GM10248 (cell line): ENCODE measurements at regions of chr11 and their contacts with region 1.

Region 1: DNA sequence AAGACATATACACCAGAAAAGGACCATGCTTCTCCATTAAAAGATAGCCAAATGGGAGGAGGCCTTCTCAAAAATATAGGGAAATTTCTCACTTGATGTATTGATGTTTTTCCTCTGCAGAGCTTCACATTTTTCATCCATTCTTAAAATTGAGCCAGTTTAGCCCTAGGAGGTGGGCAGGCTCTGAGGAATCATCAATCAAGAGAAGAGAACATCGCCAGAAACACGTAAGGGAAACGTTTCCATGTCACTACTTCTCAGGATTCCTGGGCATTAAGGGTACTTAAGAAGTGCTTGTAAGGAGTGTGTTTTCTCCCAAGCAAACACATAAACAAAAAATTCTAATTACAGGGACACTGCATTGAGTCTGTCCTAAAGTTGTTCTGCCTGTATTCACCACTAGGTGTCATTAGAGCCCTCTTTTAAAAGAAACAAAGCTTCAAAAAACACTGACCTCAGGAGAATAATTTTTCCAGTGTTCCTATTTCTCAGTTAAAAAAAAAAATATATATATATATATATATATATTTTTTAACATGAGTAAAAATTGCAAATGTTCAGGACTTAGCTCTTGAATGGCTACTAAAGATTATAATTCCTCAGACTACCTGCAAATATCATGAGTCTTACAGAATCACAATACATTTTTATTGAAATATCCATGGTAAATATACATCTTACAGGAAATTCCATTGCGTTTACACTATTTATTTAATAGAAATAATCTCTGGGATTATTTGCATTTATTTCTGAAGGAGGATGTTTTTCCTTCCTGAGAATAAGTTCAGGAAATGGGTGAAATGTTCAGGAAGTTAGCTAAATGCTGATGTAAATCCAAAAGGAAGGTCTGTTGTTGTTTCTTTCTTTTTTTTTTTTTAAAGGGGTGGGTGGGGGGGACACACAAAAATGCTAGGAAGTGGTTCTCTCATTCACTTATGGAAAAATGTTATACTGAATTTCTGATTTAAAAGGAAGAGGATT is 16.0 kb downstream of the FZD4 start:
- DNase-seq: peak; percentile 38
- CTCF ChIP-seq: peak; percentile 76

Region 2: GRCh38 chr11:86926975-86927374 is 12.2 kb before region 1 on chr11:
- CTCF ChIA-PET with region 1: interaction called, 20 read pairs
- POLR2A ChIA-PET with region 1: no interaction called
- DNase-seq: no peak
- CTCF ChIP-seq: no peak

Region 3: DNA sequence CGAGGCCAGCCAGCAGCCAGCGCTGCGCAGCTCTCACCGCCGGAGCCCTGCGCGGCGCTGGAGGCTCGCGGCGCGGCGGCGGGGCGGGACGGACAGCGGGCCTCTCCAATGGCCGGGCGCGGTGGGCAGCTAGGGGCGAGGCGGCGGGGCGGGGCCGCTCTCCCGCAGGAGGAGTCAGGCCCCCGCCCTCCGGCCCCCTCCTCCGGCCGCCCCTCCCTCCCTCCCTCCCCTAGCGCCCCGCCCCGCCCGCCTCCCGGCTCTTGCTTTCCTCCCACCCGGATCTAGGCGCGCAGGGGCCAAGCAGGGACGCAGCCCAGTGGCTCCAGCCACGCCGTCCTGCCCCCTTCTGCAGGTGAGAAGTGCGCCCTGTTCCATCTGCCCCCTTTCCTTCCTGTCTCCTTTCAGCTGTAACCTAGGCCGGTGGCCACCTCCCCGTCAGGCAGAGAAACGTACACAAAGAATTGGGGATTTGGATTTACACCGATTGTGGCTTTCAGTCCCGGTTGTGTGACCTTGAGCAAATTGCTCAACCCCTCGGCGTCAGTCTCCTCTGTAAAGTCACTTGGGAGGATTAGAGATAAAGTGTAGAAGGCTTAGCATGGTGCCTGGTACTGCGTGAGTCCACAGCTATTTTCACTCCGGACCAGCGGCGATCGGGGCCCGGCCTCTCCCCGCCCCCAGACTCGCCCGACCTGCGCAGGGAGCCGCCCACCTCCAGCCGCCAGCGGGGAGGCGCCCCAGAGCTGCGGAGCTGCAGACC is 16.4 kb after region 1 on chr11 and contains the start of gene FZD4:
- CTCF ChIA-PET with region 1: interaction called, 29 read pairs
- POLR2A ChIA-PET with region 1: no interaction called
- DNase-seq: peak; percentile 93
- CTCF ChIP-seq: peak; percentile 8

Region 4: DNA sequence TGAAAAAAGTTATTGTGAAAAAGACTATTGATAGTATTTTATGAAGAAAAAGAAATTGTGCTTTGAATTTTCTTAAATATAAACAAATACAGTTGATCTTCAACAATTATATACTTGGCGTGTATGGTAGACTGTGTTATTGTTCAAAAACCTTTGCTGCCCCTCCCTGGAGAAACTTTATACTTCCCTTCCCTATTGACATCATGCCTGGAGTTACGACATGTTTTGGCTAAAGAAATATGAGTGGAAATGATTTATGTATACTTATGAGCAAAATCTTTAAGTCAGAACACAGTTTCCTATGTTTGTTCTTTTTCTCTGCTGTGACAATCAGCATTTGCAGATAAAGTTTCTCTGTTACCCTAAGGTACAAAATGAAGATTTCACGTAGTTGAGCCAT is 342.3 kb after region 1 on chr11:
- CTCF ChIA-PET with region 1: interaction called, 19 read pairs
- POLR2A ChIA-PET with region 1: no interaction called
- DNase-seq: no peak
- CTCF ChIP-seq: no peak

Region 5: GRCh38 chr11:87290304-87290922 is 351.2 kb after region 1 on chr11:
- CTCF ChIA-PET with region 1: interaction called, 34 read pairs
- POLR2A ChIA-PET with region 1: no interaction called
- DNase-seq: peak; percentile 53
- CTCF ChIP-seq: peak; percentile 62

Region 6: DNA sequence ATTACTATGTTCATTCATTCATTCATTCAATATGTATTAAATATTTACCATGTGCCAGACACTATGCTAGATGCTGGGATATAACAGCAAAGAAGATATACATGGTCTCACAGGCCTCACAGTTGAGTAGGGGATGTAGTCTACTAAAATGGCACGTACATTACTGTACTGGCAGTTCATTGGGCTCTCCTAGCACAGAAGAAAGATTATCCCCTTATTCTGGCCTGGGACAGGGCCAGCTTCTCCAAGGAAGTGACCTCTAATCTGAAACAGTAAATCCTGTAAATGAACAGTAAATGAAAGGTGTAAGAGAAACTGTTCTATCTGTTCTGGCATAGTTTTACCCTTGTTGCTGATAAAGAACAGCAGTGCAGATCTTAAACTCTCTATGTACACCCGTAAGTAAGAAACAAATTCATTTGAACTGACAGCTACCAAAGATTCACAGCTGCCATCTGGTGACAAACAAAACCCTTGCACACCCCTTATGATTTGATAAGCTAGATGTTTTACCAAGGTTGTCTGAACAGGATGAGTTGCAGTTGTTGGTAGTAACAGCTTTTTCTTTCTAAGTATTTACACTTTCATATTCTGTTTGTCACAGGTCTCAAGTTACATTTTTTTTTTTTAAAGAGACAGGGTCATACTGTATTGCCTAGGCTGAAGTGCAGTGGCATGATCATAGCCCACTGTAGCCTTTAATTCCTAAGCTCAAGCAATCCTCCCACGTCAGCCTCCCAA is 361.6 kb after region 1 on chr11:
- CTCF ChIA-PET with region 1: interaction called, 10 read pairs
- POLR2A ChIA-PET with region 1: no interaction called
- DNase-seq: no peak
- CTCF ChIP-seq: no peak